Breast epithelium (tissue), 4 donors: ENCODE measurements at regions of chr9 and their contacts with region 1.

Region 1: DNA sequence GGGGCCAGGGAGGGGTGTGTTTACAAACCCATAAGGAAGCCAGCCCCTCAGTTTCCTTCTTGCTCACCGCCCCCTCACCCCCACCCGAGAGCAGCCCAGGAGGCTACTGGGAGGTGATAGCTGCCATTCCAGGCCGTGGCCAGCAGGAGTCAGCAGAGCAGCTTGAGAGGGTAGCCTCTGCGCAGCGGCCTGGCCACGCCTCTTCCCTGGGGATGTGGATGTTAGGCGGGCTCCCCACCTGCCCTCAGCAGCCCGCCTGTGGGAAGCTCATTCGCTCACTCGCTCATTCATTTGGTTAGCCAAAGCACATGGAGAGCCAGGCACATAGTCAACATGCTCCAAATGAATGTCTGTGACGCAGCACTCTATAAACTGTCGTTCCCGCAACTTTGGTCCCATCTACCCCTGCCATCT is 6.1 kb upstream of the DPM2 start:
- DNase-seq: peak; percentile 68 to 83
- H3K4me3 ChIP-seq: no peak overlapping the region
- H3K27ac ChIP-seq: peak overlapping the region; percentile 43 to 51
- H3K4me1 ChIP-seq: peaks cover 1 to 9% of the 10 kb centered on the region in 2 donors
- H3K27me3 ChIP-seq: no peaks in the 10 kb centered on the region
- CTCF ChIP-seq: peak; percentile 67 to 92 (median 89)
- POLR2A ChIP-seq: no peak

Region 2: DNA sequence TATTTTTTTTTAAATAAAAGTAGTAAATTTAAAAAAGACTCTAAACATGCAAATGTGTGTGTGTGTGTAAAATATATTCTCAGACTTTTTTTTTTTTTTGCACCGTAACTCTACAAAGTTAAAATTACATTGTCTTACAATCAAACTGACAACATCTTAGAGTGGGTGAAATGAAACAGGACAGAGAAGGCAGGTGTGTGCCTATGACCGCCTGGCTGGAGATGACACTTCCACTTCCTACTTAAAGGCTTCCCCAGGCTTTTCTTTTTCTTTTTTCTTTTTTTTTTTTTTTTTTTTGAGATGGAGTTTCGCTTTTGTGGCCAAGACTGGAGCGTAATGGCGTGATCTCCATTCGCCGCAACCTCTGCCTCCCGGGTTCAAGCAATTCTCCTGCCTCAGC is 63.6 kb before region 1 on chr9:
- intact Hi-C with region 1: loop called (anchors 2 kb)
- DNase-seq: no peak
- H3K4me3 ChIP-seq: no peak overlapping the region
- H3K27ac ChIP-seq: no peak overlapping the region
- H3K4me1 ChIP-seq: peaks cover 6 to 7% of the 10 kb centered on the region in 2 donors
- H3K27me3 ChIP-seq: no peaks in the 10 kb centered on the region
- CTCF ChIP-seq: no peak
- POLR2A ChIP-seq: no peak

Region 3: GRCh38 chr9:128034821-128035764 is 91.4 kb after region 1 on chr9:
- intact Hi-C with region 1: loop called (anchors 5 kb)
- DNase-seq: peak; percentile 74 to 78
- H3K4me3 ChIP-seq: no peak overlapping the region
- H3K27ac ChIP-seq: peak overlapping the region; percentile 58 to 62
- H3K4me1 ChIP-seq: no peaks in the 10 kb centered on the region
- H3K27me3 ChIP-seq: no peaks in the 10 kb centered on the region
- CTCF ChIP-seq: peak; percentile 94 to 98 (median 97)
- POLR2A ChIP-seq: no peak

Region 4: DNA sequence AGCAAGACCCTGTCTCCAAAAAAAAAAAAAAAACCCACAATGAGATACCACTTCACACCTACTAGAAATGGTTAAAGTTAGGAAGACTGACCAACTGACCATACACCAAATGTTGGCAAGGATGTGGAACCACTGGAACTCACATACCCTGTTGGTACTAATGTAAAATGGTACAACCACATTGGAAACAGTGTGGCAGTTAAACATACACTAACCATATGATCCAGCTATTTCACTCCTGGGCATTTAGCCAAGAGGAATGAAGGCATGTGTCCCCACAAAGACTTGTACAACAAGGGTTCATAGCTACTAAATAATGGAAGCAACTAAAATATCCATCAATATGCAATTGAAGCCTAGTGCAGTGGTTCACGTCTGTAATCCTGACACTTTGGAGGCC is 102.1 kb after region 1 on chr9:
- intact Hi-C with region 1: no loop called
- DNase-seq: no peak
- H3K4me3 ChIP-seq: no peak overlapping the region
- H3K27ac ChIP-seq: no peak overlapping the region
- H3K4me1 ChIP-seq: no peaks in the 10 kb centered on the region
- H3K27me3 ChIP-seq: no peaks in the 10 kb centered on the region
- CTCF ChIP-seq: no peak
- POLR2A ChIP-seq: no peak